GM12878 (cell line): ENCODE measurements at regions of chr9 and their contacts with region 1.

Region 1: DNA sequence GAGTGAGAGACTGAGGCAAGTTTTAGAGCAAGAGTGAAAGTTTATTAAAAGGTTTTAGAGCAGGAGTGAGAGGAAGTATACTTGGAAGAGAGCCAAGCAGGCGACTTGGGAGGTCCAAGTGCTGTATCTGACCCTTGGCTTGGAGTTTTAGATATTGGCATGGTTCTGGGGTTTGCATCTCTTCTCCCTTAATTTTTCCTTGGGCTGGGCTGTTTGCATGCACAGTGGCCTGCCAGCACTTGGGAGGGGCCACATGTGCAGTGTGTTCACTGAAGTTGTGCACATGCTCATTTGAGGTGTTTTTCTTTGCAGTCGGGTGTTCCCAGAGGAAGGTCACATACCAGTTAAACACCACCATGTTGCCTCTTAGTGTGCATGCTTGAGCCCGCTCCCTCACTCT is 464.1 kb downstream of the DMRT2 start:
- DNase-seq: no peak
- ATAC-seq: no peak
- H3K4me3 ChIP-seq: no peak overlapping the region
- H3K27ac ChIP-seq: no peak overlapping the region
- H3K4me1 ChIP-seq: no peaks in the 10 kb centered on the region
- H3K27me3 ChIP-seq: no peaks in the 10 kb centered on the region
- CTCF ChIP-seq: no peak
- EP300 ChIP-seq: no peak
- POLR2A ChIP-seq: no peak
- RAD21 ChIP-seq: no peak

Region 2: DNA sequence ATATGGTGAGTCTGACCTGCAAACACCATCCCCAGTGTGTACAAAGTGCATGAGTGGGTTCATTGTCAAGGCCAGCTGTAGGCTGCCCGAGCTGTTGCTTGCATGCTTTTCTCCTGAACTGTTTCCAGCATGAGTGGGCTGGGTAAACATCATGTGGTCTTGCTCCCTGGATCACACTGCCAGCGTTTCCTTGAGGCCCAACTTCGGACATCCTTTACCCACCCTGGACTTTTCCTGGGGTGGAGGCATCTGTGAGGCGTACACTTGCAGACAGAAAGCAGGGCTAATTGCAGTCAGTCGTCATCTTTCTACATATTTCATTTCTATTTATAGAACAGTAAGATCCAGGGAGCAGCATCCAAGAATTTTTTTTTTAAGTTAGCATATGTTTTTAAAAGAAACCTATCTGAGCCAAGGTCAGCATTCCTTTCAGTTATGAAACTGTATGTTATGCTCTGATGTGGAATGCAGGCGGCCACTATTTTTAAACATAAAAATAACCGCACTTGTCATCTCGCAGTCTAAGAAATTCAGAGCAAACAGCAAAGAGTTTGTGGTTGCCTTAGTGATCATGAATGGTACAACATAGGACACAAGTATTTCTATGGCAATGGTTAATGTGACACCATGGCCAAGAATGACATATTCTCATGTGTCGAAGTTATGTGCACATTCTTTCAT is 779.3 kb before region 1 on chr9:
- CTCF ChIA-PET with region 1: no interaction called
- POLR2A ChIA-PET with region 1: no interaction called
- RAD21 ChIA-PET with region 1: no interaction called
- SMC1A ChIA-PET with region 1: no interaction called
- in situ Hi-C with region 1: no loop called
- intact Hi-C with region 1: no loop called
- DNase-seq: no peak
- ATAC-seq: no peak
- H3K4me3 ChIP-seq: no peak overlapping the region
- H3K27ac ChIP-seq: no peak overlapping the region
- H3K4me1 ChIP-seq: no peaks in the 10 kb centered on the region
- H3K27me3 ChIP-seq: no peaks in the 10 kb centered on the region; a peak in 2 of 4 replicates
- CTCF ChIP-seq: no peak
- EP300 ChIP-seq: no peak
- POLR2A ChIP-seq: no peak
- RAD21 ChIP-seq: no peak

Region 3: DNA sequence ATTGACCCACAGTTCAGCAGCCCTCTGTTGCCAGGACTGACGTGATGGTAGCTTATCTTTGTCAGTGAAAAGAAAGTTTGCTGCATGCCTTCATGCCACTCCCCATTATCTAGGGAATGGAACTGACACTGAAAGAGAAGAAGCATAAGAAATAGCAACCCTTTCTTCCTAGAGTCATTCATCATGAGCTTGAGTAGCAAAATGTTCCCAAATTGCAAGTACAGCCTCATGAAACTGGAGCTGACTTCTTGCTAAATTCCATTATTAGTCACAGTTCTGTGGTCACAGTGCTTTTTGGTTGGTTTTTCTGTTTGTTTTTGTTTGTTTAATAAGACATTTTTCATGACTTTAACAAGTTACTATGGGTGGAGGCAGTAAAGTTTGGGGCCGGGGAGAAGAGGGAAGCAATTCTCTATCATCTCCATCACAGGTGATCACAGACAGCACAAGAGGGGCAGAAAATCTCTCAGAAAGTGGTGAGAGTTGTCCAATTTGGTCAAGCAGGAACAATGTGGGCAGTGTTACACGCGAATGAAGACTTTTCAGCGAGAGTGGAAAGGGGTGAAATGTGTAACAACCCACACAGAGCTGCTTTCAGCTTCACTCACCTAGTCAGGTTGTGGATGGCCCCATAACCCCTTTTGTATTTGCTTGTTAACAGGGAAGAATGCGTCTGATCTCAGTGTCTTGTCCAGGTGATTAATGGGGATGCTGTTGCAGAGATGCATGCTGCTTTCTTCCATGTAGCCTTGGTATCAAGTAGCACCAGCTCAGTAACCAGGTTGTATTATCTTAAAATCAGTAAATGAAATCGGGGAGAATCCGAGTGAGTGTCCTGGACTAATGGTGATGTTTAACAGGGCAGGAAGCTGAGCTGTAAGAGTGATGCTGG is 23.7 kb before region 1 on chr9:
- CTCF ChIA-PET with region 1: interaction called, 3 read pairs
- POLR2A ChIA-PET with region 1: interaction called, 5 read pairs
- RAD21 ChIA-PET with region 1: no interaction called
- SMC1A ChIA-PET with region 1: interaction called, 15 read pairs
- in situ Hi-C with region 1: no loop called
- intact Hi-C with region 1: no loop called
- DNase-seq: peak; percentile 35
- ATAC-seq: peak; percentile 96
- H3K4me3 ChIP-seq: no peak overlapping the region
- H3K27ac ChIP-seq: peak overlapping the region; percentile 22; the same call in 1 of the 2 replicates
- H3K4me1 ChIP-seq: peaks cover 9% of the 10 kb centered on the region; the same call in 1 of the 2 replicates
- H3K27me3 ChIP-seq: no peaks in the 10 kb centered on the region
- CTCF ChIP-seq: no peak
- EP300 ChIP-seq: peak; percentile 45 to 59; a peak in 2 of 4 replicates
- POLR2A ChIP-seq: no peak
- RAD21 ChIP-seq: no peak

Region 4: DNA sequence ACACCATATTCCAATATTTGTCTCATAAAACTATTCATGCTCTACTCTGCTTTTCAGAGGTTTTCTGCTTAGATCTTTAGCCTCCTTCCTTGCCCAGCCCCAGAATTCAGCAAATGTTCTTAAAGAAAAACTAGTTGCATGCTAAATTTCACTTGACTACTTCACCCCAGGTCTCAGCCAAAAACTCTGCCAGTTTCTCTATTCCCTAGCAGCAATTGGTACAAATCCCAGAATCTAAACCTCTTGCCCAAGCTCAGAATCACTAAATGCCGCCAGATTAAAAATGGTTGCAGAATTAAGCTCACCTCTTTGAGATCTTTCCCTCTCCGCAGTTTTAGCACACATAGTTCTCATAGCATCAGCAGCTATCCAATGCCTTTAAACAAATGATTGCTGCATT is 169.7 kb after region 1 on chr9:
- CTCF ChIA-PET with region 1: no interaction called
- POLR2A ChIA-PET with region 1: no interaction called
- RAD21 ChIA-PET with region 1: no interaction called
- SMC1A ChIA-PET with region 1: no interaction called
- in situ Hi-C with region 1: no loop called
- intact Hi-C with region 1: no loop called
- DNase-seq: no peak
- ATAC-seq: no peak
- H3K4me3 ChIP-seq: no peak overlapping the region
- H3K27ac ChIP-seq: no peak overlapping the region
- H3K4me1 ChIP-seq: no peaks in the 10 kb centered on the region
- H3K27me3 ChIP-seq: no peaks in the 10 kb centered on the region; a peak in 2 of 4 replicates
- CTCF ChIP-seq: no peak
- EP300 ChIP-seq: no peak
- POLR2A ChIP-seq: no peak
- RAD21 ChIP-seq: no peak